CD4-positive, alpha-beta memory T cell (primary cell): ENCODE measurements at regions of chr1 and their contacts with region 1.

Region 1: DNA sequence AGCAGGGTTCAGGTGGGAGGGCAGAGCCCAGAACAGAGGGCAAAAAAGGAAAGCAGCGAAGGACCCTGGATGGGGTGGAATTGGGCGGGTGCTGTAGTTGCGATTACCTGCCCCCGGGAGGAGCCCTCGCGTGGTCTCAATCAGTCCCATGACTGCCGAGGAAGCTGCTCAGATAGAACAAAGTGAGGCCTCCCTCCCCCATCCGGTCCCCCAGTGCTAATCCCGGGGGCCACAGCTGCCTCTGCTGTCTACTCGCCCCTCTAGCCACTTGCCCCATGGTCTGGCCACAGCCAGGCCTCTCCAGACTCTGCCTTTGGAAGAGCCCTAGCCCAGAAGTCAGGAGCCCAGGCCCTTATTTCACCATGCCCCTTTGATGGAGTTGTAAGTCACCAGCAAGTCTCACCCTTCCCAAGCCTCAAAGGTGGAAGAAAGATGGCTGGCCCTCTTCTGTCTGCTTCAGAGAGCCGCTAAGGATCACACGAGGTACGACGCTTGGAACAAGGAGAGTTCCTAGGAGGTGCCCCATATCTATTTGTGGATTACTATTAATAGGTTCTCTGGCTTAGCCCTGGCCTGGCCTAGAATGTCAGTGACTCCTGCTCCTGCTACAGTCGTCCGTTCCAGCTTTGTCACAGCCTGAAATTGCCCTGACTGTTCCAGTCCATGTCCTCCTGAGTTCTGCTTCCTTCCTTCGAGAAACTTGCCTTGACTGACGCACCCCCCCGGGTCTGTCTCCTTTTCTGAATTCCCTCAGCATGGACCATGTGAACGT is 16.4 kb downstream of the ECHDC2 start:
- DNase-seq: peak in 2 of 5 donors; percentile 24 to 34
- H3K4me3 ChIP-seq: no peak overlapping the region
- H3K4me3 Mint-ChIP-seq: no peak overlapping the region
- H3K27ac ChIP-seq: no peak overlapping the region
- H3K27ac Mint-ChIP-seq: peak overlapping the region in 1 of 7 donors; percentile 78
- H3K4me1 ChIP-seq: no peaks in the 10 kb centered on the region
- H3K4me1 Mint-ChIP-seq: no peaks in the 10 kb centered on the region
- H3K27me3 ChIP-seq: no peaks in the 10 kb centered on the region
- H3K27me3 Mint-ChIP-seq: no peaks in the 10 kb centered on the region

Region 2: GRCh38 chr1:53182111-53182593 is 277.0 kb after region 1 on chr1:
- CTCF ChIA-PET with region 1: interaction called, 3 read pairs
- POLR2A ChIA-PET with region 1: no interaction called
- intact Hi-C with region 1: loop called (anchors 5 kb)
- DNase-seq: peak; percentile 64 to 77 (median 72)
- H3K4me3 ChIP-seq: no peak overlapping the region
- H3K4me3 Mint-ChIP-seq: no peak overlapping the region
- H3K27ac ChIP-seq: no peak overlapping the region
- H3K27ac Mint-ChIP-seq: no peak overlapping the region
- H3K4me1 ChIP-seq: peaks cover 5% of the 10 kb centered on the region
- H3K4me1 Mint-ChIP-seq: no peaks in the 10 kb centered on the region
- H3K27me3 ChIP-seq: peaks cover 1% of the 10 kb centered on the region
- H3K27me3 Mint-ChIP-seq: peaks cover 4 to 6% of the 10 kb centered on the region in 2 donors